Left lung (tissue), 14 donors: ENCODE measurements at regions of chrX and their contacts with region 1.

Region 1: DNA sequence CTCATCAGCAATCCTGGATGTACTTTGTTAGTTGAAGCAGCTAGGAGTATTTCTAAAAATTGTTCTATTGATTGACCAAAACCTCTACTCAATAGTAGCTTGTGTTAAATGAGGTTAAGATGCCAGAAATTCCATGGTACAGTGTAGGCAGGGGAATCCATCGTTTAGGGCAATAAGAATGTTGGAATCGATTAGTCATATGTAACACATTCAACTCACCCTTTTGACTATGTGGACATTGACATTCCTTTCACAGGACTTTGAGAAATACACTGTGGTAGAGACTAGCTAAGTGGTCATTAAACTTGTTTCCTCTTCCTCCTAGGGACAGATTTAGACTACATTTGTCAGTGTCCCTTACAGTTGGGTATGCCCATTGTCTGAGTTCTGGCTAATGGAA is 40.2 kb downstream of the KDM5C start:
- DNase-seq: no peak
- ATAC-seq: no peak
- H3K4me3 ChIP-seq: no peak overlapping the region
- H3K27ac ChIP-seq: no peak overlapping the region
- H3K4me1 ChIP-seq: no peaks in the 10 kb centered on the region
- H3K27me3 ChIP-seq: no peaks in the 10 kb centered on the region
- CTCF ChIP-seq: no peak

Region 2: GRCh38 chrX:53223955-53224859 is 39.4 kb after region 1 on chrX:
- intact Hi-C with region 1: loop called in 1 of 2 experiments (anchors 5 kb)
- DNase-seq: peak in 2 of 4 donors; percentile 10 to 72
- ATAC-seq: peak; percentile 11
- H3K4me3 ChIP-seq: peak overlapping the region; percentile 83 to 100
- H3K27ac ChIP-seq: peak overlapping the region; percentile 80 to 85
- H3K4me1 ChIP-seq: peaks cover 16 to 20% of the 10 kb centered on the region in 2 donors
- H3K27me3 ChIP-seq: no peaks in the 10 kb centered on the region
- CTCF ChIP-seq: no peak

Region 3: GRCh38 chrX:53642337-53642736 is 457.5 kb after region 1 on chrX:
- intact Hi-C with region 1: no loop called
- DNase-seq: no peak
- ATAC-seq: no peak
- H3K4me3 ChIP-seq: no peak overlapping the region
- H3K27ac ChIP-seq: no peak overlapping the region
- H3K4me1 ChIP-seq: no peaks in the 10 kb centered on the region
- H3K27me3 ChIP-seq: peaks cover 0 to 3% of the 10 kb centered on the region in 2 donors
- CTCF ChIP-seq: no peak